ENCODE measurements at regions of chr16 and their contacts with region 1.

Region 1: DNA sequence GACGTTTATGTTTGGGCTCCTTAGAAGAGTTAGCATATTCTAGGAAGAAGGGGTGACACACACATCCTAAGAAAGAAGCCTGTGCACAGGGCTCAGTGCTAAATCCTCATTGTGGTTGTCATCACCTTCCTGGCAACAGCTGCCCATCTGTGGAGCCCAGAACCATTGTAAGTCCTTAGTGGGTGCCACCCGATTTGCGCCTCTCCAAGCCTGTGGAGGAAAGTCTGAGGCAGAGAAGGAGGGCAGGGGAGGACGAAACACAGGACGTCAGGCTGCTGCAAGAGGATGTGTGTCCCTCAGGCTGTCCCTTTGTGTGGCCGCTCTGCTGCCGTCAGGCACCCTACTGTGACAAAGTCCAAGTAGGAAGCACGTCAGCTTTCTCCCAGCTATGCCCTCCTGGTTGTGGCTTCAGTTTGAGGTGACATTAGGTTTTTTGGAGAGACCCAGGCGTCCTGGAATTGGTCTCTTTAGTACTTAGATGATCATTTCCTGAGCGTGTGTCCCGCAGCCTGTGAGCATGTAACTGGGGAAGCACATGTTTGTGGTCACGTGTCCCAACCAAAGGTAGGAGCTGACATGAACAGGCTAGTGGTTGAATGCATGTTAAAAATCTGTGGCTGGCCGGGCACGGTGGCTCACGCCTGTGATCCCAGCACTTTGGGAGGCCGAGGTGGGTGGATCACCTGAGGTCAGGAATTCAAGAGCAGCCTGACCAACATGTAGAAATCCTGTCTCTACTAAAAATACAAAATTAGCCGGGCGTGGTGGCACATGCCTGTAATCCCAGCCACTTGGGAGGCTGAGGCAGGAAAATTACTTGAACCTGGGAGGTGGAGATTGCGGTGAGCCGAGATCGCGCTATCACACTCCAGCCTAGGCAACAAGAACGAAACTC is 10.7 kb downstream of the CLUAP1 start:
- DNase-seq: peak; percentile 18
- H3K4me3 Mint-ChIP-seq: no peak overlapping the region
- H3K27ac Mint-ChIP-seq: peak overlapping the region; percentile 88
- H3K4me1 Mint-ChIP-seq: peaks cover 50% of the 10 kb centered on the region
- H3K27me3 Mint-ChIP-seq: no peaks in the 10 kb centered on the region

Region 2: GRCh38 chr16:3457434-3458252 is 53.9 kb before region 1 on chr16:
- CTCF ChIA-PET with region 1: no interaction called
- DNase-seq: peak; percentile 92
- H3K4me3 Mint-ChIP-seq: peak overlapping the region; percentile 76
- H3K27ac Mint-ChIP-seq: peak overlapping the region; percentile 84
- H3K4me1 Mint-ChIP-seq: peaks cover 50% of the 10 kb centered on the region
- H3K27me3 Mint-ChIP-seq: no peaks in the 10 kb centered on the region

Region 3: DNA sequence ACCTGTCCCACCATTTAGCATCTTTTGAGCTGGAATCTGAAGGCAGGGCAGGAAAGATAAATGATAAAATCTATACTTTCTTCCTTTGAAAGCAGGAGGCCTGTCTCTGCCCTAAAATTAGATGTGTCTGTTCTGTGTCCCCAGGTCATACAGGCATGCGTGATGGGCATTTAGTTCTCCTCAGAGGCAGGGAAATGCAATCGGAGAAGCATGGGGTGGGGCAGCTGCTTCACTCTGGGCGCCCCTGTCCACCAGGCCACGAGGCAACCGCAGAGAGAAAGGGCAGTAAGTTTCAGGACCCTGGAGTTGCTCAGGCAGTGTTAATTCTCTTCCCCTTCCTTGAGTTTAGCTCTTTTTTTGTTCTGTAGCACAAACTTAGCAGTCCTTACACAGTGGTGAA is 14.4 kb after region 1 on chr16:
- CTCF ChIA-PET with region 1: interaction called, 13 read pairs
- DNase-seq: no peak
- H3K4me3 Mint-ChIP-seq: no peak overlapping the region
- H3K27ac Mint-ChIP-seq: peak overlapping the region; percentile 33
- H3K4me1 Mint-ChIP-seq: peaks cover 12% of the 10 kb centered on the region
- H3K27me3 Mint-ChIP-seq: no peaks in the 10 kb centered on the region

Region 4: GRCh38 chr16:3587547-3588110 is 76.1 kb after region 1 on chr16:
- CTCF ChIA-PET with region 1: no interaction called
- DNase-seq: no peak
- H3K4me3 Mint-ChIP-seq: no peak overlapping the region
- H3K27ac Mint-ChIP-seq: no peak overlapping the region
- H3K4me1 Mint-ChIP-seq: peaks cover 6% of the 10 kb centered on the region
- H3K27me3 Mint-ChIP-seq: no peaks in the 10 kb centered on the region